Pancreas (tissue), 10 donors: ENCODE measurements at regions of chr6 and their contacts with region 1.

Region 1: DNA sequence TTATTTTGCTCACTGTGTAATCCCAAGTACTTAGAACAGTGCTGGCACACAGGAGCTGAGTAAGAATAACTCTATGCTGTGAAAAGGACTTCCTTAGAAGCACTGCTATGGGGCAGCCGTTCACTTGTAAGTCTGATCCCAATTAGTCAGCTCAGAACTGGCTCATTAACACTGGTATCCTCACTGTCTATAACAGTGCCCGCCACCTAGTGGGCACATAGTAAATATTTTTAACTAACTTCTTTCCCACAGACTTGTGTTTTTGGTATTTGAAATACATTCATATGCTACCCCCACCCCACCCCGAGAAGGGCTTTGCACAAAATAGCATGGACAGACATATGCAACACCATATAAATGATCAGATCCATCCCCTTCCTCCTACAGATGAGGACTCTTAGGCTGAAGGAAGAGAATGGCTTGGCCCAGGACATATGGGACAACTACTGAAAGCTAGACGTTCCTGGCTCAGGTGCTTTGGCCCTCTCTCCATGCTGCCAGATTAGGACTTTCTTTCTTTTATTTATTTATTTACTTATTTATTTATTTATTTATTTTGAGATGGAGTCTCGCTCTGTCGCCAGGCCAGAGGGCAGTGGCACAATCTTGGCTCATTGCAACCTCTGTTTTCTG is 47.1 kb downstream of the DST start:
- DNase-seq: peak in 2 of 6 donors; percentile 25 to 32
- ATAC-seq: peak; percentile 63 to 84 (median 82)
- H3K4me3 ChIP-seq: no peak overlapping the region
- H3K27ac ChIP-seq: no peak overlapping the region
- H3K4me1 ChIP-seq: no peaks in the 10 kb centered on the region
- H3K27me3 ChIP-seq: peaks cover 0 to 3% (median 0%) of the 10 kb centered on the region in 4 donors
- CTCF ChIP-seq: peak; percentile 30 to 54 (median 44)

Region 2: DNA sequence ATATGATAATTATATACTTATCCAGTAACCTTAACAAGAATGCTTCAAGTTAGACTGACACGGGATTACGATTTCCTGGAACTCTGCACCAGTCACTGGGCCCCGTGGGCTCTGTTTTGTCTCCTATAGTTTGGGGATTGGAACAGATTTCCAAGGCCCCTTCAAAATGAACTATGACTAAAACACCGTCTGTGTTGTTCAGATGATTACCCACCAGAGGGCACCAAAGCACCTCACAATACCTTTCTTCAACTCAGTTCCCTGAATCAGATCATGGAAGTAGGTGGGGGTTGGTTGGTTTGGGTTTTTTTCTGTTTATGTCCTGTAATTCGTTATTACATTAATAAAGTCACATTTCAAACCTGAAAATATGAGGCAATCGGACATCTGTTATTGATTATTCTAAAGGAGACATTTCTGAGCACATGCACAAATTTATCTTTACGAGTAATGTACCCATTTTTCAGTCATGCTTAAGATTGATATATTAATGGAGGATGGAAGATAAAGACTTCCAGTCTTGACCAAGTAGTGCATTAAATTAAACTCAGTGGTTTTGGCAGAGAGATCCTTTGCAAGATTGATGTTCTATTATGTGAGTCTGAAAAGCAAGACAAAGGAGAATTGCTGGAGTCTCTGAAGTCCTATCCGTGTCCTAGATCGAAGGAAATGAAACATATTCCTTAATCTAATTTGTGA is 236.3 kb before region 1 on chr6:
- intact Hi-C with region 1: loop called (anchors 5 to 10 kb)
- DNase-seq: peak in 3 of 6 donors; percentile 50 to 74 (median 52)
- ATAC-seq: peak; percentile 87 to 99 (median 97)
- H3K4me3 ChIP-seq: no peak overlapping the region
- H3K27ac ChIP-seq: no peak overlapping the region
- H3K4me1 ChIP-seq: no peaks in the 10 kb centered on the region
- H3K27me3 ChIP-seq: no peaks in the 10 kb centered on the region
- CTCF ChIP-seq: peak; percentile 49 to 70 (median 65)

Region 3: GRCh38 chr6:56364827-56365313 is 230.7 kb before region 1 on chr6:
- intact Hi-C with region 1: loop called in 1 of 3 experiments (anchors 10 kb)
- DNase-seq: no peak
- ATAC-seq: peak in 2 of 4 donors; percentile 19 to 44
- H3K4me3 ChIP-seq: no peak overlapping the region
- H3K27ac ChIP-seq: no peak overlapping the region
- H3K4me1 ChIP-seq: peaks cover 0 to 13% (median 0%) of the 10 kb centered on the region in 3 donors
- H3K27me3 ChIP-seq: no peaks in the 10 kb centered on the region
- CTCF ChIP-seq: no peak

Region 4: DNA sequence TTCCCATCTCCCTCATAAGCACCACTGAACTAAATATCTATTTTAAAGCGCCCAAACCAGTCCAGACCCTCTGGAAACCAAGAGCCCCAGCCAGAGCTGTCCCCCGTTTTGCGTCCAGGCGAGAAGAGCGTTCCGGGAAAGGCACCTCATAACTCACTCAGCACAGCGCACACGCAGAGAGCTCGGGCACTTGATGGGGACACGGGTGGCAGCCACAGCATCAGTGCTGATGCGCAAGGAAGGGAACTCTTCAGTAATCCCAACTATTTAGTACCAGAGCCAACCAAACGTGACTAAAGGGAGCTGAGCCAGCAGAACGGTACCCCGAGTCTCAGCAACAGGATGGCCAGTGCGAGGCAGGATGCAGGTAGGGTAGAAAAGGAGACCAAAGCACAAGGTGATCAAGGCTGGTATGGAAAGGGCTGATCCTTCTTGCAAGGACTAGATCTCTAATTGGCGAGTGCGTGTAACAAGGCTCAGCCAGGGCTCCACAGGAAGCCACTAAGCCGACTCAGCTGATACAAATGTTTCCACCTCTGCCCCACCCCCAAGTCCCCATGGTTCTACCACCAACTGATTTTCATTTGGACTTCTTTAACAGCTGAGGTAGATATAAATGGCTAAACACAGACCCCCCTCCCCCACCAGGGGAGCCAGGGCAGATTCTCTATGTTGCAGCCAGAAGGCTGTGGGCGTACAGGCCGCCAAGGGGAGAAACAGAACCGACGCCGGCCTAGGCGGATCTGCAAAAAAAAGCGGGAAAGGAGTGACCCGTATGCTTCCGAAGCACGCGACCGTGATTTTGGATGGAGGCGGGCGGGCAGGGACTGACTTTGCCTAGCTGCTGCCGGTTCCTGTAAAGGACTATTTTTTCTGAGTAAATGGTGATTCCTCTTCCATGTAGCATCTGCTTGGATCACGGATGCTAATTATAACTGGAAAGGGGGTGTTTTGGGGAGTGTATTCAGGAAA is 164.7 kb before region 1 on chr6:
- intact Hi-C with region 1: no loop called
- DNase-seq: peak in 1 of 6 donors; percentile 34
- ATAC-seq: no peak
- H3K4me3 ChIP-seq: no peak overlapping the region
- H3K27ac ChIP-seq: no peak overlapping the region
- H3K4me1 ChIP-seq: no peaks in the 10 kb centered on the region
- H3K27me3 ChIP-seq: no peaks in the 10 kb centered on the region
- CTCF ChIP-seq: no peak

Region 5: DNA sequence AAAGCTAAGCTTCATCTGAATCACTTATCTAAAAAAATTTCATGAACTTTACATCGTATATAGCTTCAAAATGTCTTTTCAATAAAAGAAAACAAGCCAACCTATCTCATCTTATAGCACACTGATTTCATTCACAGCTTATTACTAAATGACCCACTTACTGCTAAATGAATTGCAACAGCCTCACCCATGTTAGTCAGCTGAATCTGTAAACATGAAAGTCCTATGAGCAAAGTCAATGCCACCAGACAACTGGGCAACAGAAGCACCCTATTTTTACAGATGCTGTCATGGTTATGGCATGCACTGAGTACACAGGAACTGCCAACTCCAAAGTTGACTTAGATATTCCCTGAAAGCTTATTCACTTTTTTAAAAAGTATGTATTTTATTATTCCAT is 88.3 kb after region 1 on chr6:
- intact Hi-C with region 1: no loop called
- DNase-seq: peak in 1 of 6 donors; percentile 13
- ATAC-seq: peak in 3 of 4 donors; percentile 80 to 95 (median 91)
- H3K4me3 ChIP-seq: no peak overlapping the region
- H3K27ac ChIP-seq: peak overlapping the region in 2 of 4 donors; percentile 35 to 42
- H3K4me1 ChIP-seq: peaks cover 0 to 5% (median 0%) of the 10 kb centered on the region in 3 donors
- H3K27me3 ChIP-seq: no peaks in the 10 kb centered on the region
- CTCF ChIP-seq: no peak

Region 6: DNA sequence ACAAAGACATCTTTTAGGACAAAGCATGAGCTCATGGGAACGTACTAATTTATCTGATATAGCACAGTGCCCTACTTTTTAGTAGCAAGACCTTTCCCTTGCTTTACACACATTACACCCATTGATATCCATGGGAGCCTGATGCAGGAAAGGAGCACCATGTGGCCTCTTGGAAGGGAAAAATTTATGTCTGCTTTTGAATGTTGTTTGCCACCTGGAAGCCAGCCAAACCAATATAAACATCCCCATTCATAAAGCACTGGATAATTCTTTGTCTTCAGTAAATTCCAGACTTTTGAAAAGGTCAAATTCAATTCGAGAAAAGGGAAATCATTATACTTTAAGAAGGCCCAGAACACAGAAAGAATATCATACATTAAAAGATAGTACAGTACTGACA is 207.0 kb after region 1 on chr6:
- intact Hi-C with region 1: no loop called
- DNase-seq: no peak
- ATAC-seq: no peak
- H3K4me3 ChIP-seq: no peak overlapping the region
- H3K27ac ChIP-seq: no peak overlapping the region
- H3K4me1 ChIP-seq: no peaks in the 10 kb centered on the region
- H3K27me3 ChIP-seq: no peaks in the 10 kb centered on the region
- CTCF ChIP-seq: no peak

Region 7: GRCh38 chr6:57006131-57006737 is 410.6 kb after region 1 on chr6:
- intact Hi-C with region 1: no loop called
- DNase-seq: no peak
- ATAC-seq: no peak
- H3K4me3 ChIP-seq: no peak overlapping the region
- H3K27ac ChIP-seq: no peak overlapping the region
- H3K4me1 ChIP-seq: peaks cover 0 to 3% (median 0%) of the 10 kb centered on the region in 3 donors
- H3K27me3 ChIP-seq: peaks cover 0 to 7% (median 0%) of the 10 kb centered on the region in 4 donors
- CTCF ChIP-seq: no peak